ENCODE measurements at regions of chr12 and their contacts with region 1.

Region 1: DNA sequence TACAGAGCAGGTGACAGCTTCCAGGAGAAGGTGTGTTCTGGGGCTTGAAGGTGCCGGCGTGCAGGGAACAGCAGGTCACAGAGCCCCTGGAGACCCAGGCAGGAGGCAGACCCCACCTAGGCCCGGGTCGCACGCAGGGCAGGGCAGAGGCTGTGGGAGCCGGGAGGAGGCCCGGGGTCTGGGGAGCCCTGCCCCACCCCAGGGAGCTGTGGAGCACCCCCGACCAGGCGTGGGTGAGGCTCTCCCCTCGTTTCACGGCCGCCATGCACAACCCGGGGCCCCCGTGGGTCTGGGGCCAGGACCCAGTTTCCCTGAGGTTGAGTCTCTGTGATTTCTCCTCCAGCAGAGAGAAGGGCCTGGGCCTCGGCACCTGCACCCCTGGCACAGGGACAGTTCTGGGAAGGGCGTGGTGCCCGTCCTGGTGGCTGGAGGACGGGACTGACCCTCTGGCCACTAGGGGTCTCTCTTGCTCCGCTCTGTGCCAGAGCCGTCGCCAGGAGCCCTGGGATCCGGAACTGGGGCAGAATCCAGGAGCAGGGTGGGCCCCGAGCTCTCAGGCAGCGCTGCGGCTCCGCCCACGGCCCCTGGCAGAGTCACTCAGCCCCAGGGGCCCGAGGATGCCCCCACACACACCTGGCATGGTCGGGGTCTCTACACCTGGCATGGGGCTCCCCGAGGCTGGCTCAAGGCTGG is 75.2 kb upstream of the FBRSL1 start:
- DNase-seq: peak; percentile 34
- H3K4me3 ChIP-seq: no peak overlapping the region
- H3K27ac ChIP-seq: no peak overlapping the region
- H3K27me3 ChIP-seq: peaks cover 8% of the 10 kb centered on the region
- CTCF ChIP-seq: peak; percentile 91

Region 2: DNA sequence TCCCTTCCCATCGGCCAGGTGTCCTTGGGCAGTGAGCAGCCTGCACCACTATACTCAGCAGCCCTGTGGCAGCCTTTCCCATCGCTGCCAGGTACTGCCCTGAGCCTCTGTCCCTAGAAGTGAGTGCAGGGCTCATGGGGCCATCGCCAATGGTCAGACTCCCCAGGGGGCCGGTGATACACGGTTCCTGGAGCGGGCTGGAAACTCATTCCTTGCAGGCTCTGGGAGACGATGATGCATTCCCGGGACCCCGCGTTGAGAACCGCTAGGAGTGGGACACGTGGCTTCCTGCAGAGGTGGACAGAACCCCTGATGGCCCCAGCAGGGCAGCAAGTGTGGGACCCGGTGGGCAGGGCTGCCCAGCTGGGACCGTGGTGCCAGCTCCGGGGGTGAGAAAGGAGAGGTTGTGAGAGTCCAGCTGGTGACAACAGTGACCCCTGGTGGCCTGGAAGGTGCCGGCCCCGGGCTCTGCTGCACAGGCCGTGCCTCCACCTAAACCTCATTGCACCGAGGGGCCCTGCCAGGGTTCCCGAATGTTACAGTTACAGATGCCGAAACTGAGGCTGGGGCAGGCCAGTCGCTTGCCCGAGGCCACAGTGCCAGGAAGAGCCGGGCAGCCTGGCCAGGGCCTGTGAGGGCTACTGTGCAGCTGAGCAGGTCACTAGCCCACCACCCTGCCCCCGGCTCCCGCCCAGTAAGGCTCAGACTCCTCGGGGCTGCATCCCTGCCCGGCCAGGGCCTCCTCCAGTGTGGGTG is 109.0 kb after region 1 on chr12:
- CTCF ChIA-PET with region 1: interaction called, 16 read pairs
- POLR2A ChIA-PET with region 1: interaction called, 3 read pairs
- DNase-seq: no peak
- H3K4me3 ChIP-seq: no peak overlapping the region
- H3K27ac ChIP-seq: no peak overlapping the region
- H3K27me3 ChIP-seq: no peaks in the 10 kb centered on the region
- CTCF ChIP-seq: peak; percentile 86